ENCODE measurements at regions of chr12 and their contacts with region 1.

Region 1: DNA sequence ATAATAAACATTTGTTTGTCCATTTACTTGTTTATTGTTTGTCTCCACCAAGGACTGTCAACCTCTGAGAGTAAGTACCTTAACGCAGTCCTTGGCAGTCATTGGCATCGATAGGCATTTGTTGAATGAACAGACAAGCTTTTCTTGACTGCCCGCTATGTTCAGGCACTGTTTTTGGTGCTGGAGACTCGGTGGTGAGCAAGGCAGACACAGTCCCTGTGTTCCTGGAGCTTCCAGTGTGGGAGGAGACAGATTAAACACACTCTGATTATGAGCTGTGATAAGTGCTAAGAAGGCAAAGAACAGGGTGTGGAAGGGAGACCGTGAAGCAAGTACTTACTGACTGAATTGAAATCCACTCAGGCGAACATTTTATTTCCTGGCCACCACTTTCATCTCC is 1.2 kb downstream of the ATP6V0A2 start:
- DNase-seq: peak; percentile 35
- H3K4me3 Mint-ChIP-seq: peak overlapping the region; percentile 85
- H3K27ac Mint-ChIP-seq: peak overlapping the region; percentile 89
- H3K4me1 Mint-ChIP-seq: peaks cover 47% of the 10 kb centered on the region
- H3K27me3 Mint-ChIP-seq: no peaks in the 10 kb centered on the region

Region 2: GRCh38 chr12:123075646-123076171 is 637.7 kb before region 1 on chr12:
- CTCF ChIA-PET with region 1: no interaction called
- POLR2A ChIA-PET with region 1: no interaction called
- intact Hi-C with region 1: loop called (anchors 1 kb)
- DNase-seq: peak; percentile 88
- H3K4me3 Mint-ChIP-seq: peak overlapping the region; percentile 68
- H3K27ac Mint-ChIP-seq: peak overlapping the region; percentile 95
- H3K4me1 Mint-ChIP-seq: peaks cover 41% of the 10 kb centered on the region
- H3K27me3 Mint-ChIP-seq: no peaks in the 10 kb centered on the region

Region 3: DNA sequence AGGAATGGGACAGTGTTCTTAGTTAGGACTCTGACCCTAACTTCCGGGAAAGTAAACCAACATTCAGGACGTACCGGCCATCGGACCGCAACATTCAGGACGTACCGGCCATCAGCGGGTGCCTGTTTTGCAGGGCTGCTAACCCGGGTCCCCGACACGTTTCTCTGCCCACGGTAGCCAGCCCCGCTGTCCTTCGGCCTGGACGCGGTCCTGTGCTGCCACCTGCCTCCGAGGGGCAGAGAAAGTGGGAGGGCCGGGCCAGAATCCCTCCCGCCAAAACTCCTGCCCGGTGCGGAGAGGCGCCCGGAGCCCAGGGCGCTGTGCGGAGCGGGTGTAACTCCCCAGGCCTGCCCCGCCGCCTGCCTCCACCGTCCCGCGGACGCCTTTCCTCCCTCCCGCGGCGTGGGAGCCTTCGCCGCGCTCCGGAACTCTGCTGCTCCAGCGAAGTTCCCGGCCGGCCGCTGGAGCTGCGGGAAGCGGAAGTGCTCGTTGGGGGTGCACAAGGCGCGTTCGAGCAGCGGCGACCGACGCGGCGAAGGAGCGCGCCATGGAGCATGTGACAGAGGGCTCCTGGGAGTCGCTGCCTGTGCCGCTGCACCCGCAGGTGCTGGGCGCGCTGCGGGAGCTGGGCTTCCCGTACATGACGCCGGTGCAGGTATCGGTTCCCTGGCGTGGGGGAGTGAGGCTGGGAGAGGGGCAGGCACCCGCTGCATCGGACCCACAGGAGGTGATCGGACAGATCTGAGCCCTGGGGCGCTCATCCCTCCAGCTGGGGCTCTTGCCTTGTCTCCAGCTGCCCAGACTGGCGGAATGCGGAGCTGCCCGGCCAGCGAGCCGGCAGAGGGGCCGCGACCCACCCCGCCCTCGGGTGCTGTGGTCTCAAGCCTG is 111.6 kb before region 1 on chr12 and contains the start of gene DDX55:
- CTCF ChIA-PET with region 1: no interaction called
- POLR2A ChIA-PET with region 1: interaction called, 6 read pairs
- intact Hi-C with region 1: loop called (anchors 1 kb)
- DNase-seq: peak; percentile 90
- H3K4me3 Mint-ChIP-seq: peak within 1 kb of the TSS; percentile 84
- H3K27ac Mint-ChIP-seq: peak within 1 kb of the TSS; percentile 90
- H3K4me1 Mint-ChIP-seq: peaks cover 30% of the 10 kb centered on the region
- H3K27me3 Mint-ChIP-seq: no peaks in the 10 kb centered on the region
- total RNA-seq, gene DDX55: 44.0 to 45.1 TPM

Region 4: GRCh38 chr12:123690191-123690840 is 23.1 kb before region 1 on chr12:
- CTCF ChIA-PET with region 1: no interaction called
- POLR2A ChIA-PET with region 1: interaction called, 4 read pairs
- intact Hi-C with region 1: loop called (anchors 1 kb)
- DNase-seq: no peak
- H3K4me3 Mint-ChIP-seq: no peak overlapping the region
- H3K27ac Mint-ChIP-seq: no peak overlapping the region
- H3K4me1 Mint-ChIP-seq: peaks cover 11% of the 10 kb centered on the region
- H3K27me3 Mint-ChIP-seq: no peaks in the 10 kb centered on the region

Region 5: DNA sequence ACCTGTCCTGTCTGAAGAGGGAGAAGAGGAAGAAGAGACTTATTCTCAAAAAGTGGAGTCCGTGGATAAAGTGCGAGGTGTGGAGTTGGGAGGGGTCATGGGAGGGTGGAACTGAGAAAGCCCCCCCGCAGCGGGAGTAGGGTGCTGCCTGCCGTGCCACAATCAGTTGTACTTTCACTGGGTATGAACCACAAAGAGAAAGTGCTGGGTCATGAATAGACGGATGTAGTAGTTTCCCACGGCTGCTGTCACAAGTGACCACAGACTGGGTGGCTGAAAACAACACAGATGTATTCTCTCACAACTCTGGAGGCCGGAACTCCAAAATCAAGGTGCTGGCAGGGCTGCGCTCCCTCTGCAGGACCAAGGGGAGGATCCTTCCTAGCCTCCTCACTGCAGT is 54.2 kb after region 1 on chr12:
- CTCF ChIA-PET with region 1: no interaction called
- POLR2A ChIA-PET with region 1: no interaction called
- intact Hi-C with region 1: loop called (anchors 2 kb)
- DNase-seq: peak; percentile 49
- H3K4me3 Mint-ChIP-seq: no peak overlapping the region
- H3K27ac Mint-ChIP-seq: no peak overlapping the region
- H3K4me1 Mint-ChIP-seq: peaks cover 6% of the 10 kb centered on the region
- H3K27me3 Mint-ChIP-seq: peaks cover 7% of the 10 kb centered on the region

Region 6: DNA sequence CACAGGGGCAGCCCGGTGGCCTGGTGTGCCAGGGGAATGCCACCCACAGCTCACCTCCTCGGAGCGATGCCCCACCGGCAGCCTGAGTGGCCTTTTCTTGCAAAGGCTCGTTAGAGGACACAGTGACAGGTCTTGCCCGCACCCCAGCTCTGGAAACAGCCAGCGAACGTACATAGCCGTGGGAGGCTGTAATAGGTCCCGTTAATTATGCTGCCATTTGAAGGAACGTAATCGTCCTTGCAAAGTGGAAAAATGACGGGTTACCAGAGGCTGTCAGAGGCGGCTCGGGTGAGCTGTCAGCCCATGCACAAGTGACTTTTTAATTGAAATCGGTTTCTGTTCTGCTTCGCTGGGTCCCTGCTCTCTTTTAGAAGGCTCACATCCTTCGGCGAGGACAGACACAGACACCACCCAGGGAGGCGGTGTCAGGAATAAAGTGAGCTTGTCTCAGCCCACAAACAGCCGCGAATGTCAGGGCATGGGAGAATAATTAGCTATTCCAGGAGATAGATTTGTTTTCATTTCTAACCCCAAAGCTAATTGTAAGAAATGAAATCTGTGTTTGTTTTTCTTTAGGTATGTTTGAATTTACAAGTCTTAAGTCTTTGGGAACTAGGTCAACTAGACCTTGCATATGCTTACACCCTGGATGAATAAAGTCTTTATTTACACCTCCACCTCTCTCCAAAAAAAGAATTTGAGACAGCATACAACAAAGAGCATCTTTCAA is 504.3 kb after region 1 on chr12:
- CTCF ChIA-PET with region 1: no interaction called
- POLR2A ChIA-PET with region 1: no interaction called
- intact Hi-C with region 1: no loop called
- DNase-seq: no peak
- H3K4me3 Mint-ChIP-seq: no peak overlapping the region
- H3K27ac Mint-ChIP-seq: no peak overlapping the region
- H3K4me1 Mint-ChIP-seq: no peaks in the 10 kb centered on the region
- H3K27me3 Mint-ChIP-seq: peaks cover 8% of the 10 kb centered on the region

Region 7: GRCh38 chr12:124767066-124767821 is 1053.8 kb after region 1 on chr12:
- CTCF ChIA-PET with region 1: no interaction called
- POLR2A ChIA-PET with region 1: no interaction called
- intact Hi-C with region 1: loop called (anchors 10 kb)
- DNase-seq: peak; percentile 88
- H3K4me3 Mint-ChIP-seq: no peak overlapping the region
- H3K27ac Mint-ChIP-seq: no peak overlapping the region
- H3K4me1 Mint-ChIP-seq: peaks cover 18% of the 10 kb centered on the region
- H3K27me3 Mint-ChIP-seq: peaks cover 15% of the 10 kb centered on the region

Measured in activated CD4-positive, alpha-beta memory T cell treated with anti-CD3 and anti-CD28 coated beads for 36 hours (primary cell).